WTC11 (cell line): ENCODE measurements at regions of chr6 and their contacts with region 1.

Region 1: GRCh38 chr6:41560431-41561192 is 14.4 kb downstream of the FOXP4 start:
- DNase-seq: peak; percentile 79
- ATAC-seq: peak; percentile 60
- H3K4me3 Mint-ChIP-seq: peak overlapping the region; percentile 79
- H3K27ac Mint-ChIP-seq: no peak overlapping the region
- H3K4me1 Mint-ChIP-seq: peaks cover 74% of the 10 kb centered on the region
- H3K27me3 Mint-ChIP-seq: peaks cover 43% of the 10 kb centered on the region
- CTCF ChIP-seq: no peak

Region 2: GRCh38 chr6:41578217-41579087 is 17.8 kb after region 1 on chr6:
- CTCF ChIA-PET with region 1: interaction called, 16 read pairs
- POLR2A ChIA-PET with region 1: interaction called, 3 read pairs
- DNase-seq: peak; percentile 81
- ATAC-seq: peak; percentile 71
- H3K4me3 Mint-ChIP-seq: peak overlapping the region; percentile 57
- H3K27ac Mint-ChIP-seq: peak overlapping the region; percentile 99
- H3K4me1 Mint-ChIP-seq: peaks cover 83% of the 10 kb centered on the region
- H3K27me3 Mint-ChIP-seq: no peaks in the 10 kb centered on the region; the same call in 1 of the 2 replicates
- CTCF ChIP-seq: no peak